ENCODE measurements at regions of chr12 and their contacts with region 1.

Region 1: GRCh38 chr12:128920468-128920867 is 67.2 kb downstream of the GLT1D1 start:
- DNase-seq: peak in 1 of 2 donors; percentile 88
- H3K4me3 ChIP-seq: peak overlapping the region in 1 of 2 donors; percentile 21
- H3K27ac ChIP-seq: peak overlapping the region; percentile 62 to 66
- H3K4me1 ChIP-seq: peaks cover 5 to 7% of the 10 kb centered on the region in 2 donors
- H3K27me3 ChIP-seq: no peaks in the 10 kb centered on the region
- CTCF ChIP-seq: no peak

Region 2: GRCh38 chr12:128797119-128798118 is 123.0 kb before region 1 on chr12:
- intact Hi-C with region 1: loop called (anchors 5 kb)
- DNase-seq: peak in 1 of 2 donors; percentile 83
- H3K4me3 ChIP-seq: no peak overlapping the region
- H3K27ac ChIP-seq: peak overlapping the region in 1 of 2 donors; percentile 94
- H3K4me1 ChIP-seq: peaks cover 0 to 39% of the 10 kb centered on the region in 2 donors
- H3K27me3 ChIP-seq: no peaks in the 10 kb centered on the region
- CTCF ChIP-seq: no peak

Region 3: DNA sequence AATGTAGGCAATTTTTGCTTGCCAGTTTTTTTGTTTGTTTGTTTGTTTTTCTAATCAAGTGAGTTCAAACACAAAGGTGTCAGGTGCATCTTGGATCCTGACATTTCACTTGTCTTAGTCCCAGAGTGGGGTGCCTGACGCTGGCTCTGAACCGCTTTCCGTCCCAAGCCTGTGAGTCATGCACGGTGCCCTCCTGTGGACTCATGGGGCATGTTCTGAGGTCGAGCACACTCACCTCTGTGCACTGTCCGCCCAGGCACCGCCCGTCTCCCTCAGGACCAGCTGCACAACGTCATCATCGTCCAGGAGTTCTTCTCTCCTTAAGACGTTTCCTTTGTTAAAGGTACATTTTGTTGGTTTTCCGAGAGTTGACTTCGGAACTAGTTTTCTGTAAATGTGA is 31.0 kb after region 1 on chr12:
- intact Hi-C with region 1: no loop called
- DNase-seq: no peak
- H3K4me3 ChIP-seq: no peak overlapping the region
- H3K27ac ChIP-seq: no peak overlapping the region
- H3K4me1 ChIP-seq: no peaks in the 10 kb centered on the region
- H3K27me3 ChIP-seq: no peaks in the 10 kb centered on the region
- CTCF ChIP-seq: no peak

Region 4: DNA sequence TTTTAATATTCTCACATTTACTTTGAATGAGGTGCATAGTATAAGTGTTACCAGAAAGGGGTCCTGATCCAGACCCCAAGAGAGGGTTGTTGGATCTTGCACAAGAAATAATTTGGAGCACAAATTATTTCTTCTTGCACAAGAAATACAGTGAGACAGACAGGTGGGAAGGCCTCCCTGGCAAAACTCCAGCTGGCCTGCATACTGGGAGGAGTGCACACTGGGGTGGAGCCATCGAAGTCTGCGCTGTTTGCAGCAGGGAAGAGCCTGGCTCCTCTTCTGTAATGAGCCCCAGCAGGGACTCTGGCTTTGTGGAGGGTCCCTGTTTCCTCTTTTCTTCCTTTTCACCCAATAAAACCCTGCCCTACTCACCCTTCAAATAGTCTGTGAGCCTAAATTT is 74.4 kb after region 1 on chr12:
- intact Hi-C with region 1: no loop called
- DNase-seq: no peak
- H3K4me3 ChIP-seq: no peak overlapping the region
- H3K27ac ChIP-seq: no peak overlapping the region
- H3K4me1 ChIP-seq: no peaks in the 10 kb centered on the region
- H3K27me3 ChIP-seq: no peaks in the 10 kb centered on the region
- CTCF ChIP-seq: no peak